Activated CD8-positive, alpha-beta T cell treated with anti-CD3 and anti-CD28 coated beads for 36 hours (primary cell): ENCODE measurements at regions of chr9 and their contacts with region 1.

Region 1: GRCh38 chr9:97615439-97616072 is 17.6 kb downstream of the TSTD2 start:
- DNase-seq: peak; percentile 72
- ATAC-seq: peak; percentile 44
- H3K4me3 Mint-ChIP-seq: no peak overlapping the region
- H3K27ac Mint-ChIP-seq: no peak overlapping the region
- H3K4me1 Mint-ChIP-seq: peaks cover 21% of the 10 kb centered on the region
- H3K27me3 Mint-ChIP-seq: no peaks in the 10 kb centered on the region
- CTCF ChIP-seq: peak; percentile 86

Region 2: DNA sequence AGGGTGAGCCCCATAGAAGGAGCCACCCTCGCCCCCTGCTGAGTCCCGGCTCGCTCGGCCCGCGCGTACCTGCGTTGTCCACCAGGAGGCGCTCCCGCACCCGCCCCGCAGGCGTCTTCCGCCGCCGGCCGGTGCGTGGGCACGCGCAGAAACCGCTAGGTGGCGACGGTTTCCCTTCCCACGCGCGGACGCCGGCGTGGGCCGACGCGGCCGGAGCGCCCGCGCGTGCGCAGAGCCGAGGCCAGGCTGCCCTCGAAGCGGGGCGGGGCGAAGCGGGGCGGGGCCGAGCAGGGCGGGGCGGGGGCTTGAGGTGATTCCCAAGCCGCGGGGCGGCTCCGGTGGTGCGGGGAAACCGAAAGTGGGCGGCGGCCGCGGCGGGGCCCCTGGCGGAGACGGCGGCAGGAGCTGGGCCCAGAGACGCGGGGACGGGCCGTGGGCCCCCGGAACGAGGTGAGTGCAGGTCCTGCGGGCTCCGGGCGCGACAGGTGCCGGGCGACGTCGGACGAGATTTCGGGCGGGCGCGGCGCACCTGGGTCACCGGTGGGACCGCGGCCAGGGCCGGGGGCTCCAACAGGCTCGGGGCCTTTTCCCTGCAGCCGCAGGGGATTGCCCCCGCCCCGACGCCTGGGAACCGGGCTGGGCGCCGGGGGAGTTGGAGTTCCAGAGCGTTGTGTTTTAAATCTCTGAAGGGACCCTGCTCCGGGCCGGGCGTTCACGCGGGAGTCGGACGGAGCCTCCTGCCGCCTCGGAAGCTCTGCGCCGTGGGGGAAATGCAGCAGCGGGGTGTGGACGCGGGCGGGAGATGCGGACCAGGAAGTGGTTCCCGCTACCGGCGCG is 203.5 kb before region 1 on chr9 and contains the start of gene TDRD7:
- CTCF ChIA-PET with region 1: interaction called, 55 read pairs
- POLR2A ChIA-PET with region 1: no interaction called
- intact Hi-C with region 1: no loop called
- DNase-seq: peak; percentile 86
- ATAC-seq: peak; percentile 89
- H3K4me3 Mint-ChIP-seq: peak within 1 kb of the TSS; percentile 84
- H3K27ac Mint-ChIP-seq: peak within 1 kb of the TSS; percentile 81
- H3K4me1 Mint-ChIP-seq: peaks cover 21% of the 10 kb centered on the region
- H3K27me3 Mint-ChIP-seq: peaks cover 19% of the 10 kb centered on the region
- CTCF ChIP-seq: peak; percentile 99
- total RNA-seq, gene TDRD7: 3.7 to 4.0 TPM

Region 3: GRCh38 chr9:97468658-97469448 is 146.7 kb before region 1 on chr9:
- CTCF ChIA-PET with region 1: interaction called, 95 read pairs
- POLR2A ChIA-PET with region 1: no interaction called
- intact Hi-C with region 1: no loop called
- DNase-seq: peak; percentile 64
- ATAC-seq: peak; percentile 83
- H3K4me3 Mint-ChIP-seq: no peak overlapping the region
- H3K27ac Mint-ChIP-seq: no peak overlapping the region
- H3K4me1 Mint-ChIP-seq: no peaks in the 10 kb centered on the region
- H3K27me3 Mint-ChIP-seq: no peaks in the 10 kb centered on the region
- CTCF ChIP-seq: peak; percentile 49

Region 4: GRCh38 chr9:97632985-97633858 is 17.7 kb after region 1 on chr9 and contains the starts of genes NCBP1 and TSTD2:
- CTCF ChIA-PET with region 1: interaction called, 81 read pairs
- POLR2A ChIA-PET with region 1: interaction called, 3 read pairs
- intact Hi-C with region 1: no loop called
- DNase-seq: peak; percentile 98
- ATAC-seq: peak; percentile 91
- H3K4me3 Mint-ChIP-seq: peak within 1 kb of the TSS; percentile 98
- H3K27ac Mint-ChIP-seq: peak within 1 kb of the TSS; percentile 99
- H3K4me1 Mint-ChIP-seq: peaks cover 48% of the 10 kb centered on the region
- H3K27me3 Mint-ChIP-seq: no peaks in the 10 kb centered on the region
- CTCF ChIP-seq: no peak
- total RNA-seq, gene NCBP1: 37.6 to 41.7 TPM
- total RNA-seq, gene TSTD2: 15.2 to 15.3 TPM